Dorsolateral prefrontal cortex (tissue), 120 donors: ENCODE measurements at regions of chr2 and their contacts with region 1.

Region 1: DNA sequence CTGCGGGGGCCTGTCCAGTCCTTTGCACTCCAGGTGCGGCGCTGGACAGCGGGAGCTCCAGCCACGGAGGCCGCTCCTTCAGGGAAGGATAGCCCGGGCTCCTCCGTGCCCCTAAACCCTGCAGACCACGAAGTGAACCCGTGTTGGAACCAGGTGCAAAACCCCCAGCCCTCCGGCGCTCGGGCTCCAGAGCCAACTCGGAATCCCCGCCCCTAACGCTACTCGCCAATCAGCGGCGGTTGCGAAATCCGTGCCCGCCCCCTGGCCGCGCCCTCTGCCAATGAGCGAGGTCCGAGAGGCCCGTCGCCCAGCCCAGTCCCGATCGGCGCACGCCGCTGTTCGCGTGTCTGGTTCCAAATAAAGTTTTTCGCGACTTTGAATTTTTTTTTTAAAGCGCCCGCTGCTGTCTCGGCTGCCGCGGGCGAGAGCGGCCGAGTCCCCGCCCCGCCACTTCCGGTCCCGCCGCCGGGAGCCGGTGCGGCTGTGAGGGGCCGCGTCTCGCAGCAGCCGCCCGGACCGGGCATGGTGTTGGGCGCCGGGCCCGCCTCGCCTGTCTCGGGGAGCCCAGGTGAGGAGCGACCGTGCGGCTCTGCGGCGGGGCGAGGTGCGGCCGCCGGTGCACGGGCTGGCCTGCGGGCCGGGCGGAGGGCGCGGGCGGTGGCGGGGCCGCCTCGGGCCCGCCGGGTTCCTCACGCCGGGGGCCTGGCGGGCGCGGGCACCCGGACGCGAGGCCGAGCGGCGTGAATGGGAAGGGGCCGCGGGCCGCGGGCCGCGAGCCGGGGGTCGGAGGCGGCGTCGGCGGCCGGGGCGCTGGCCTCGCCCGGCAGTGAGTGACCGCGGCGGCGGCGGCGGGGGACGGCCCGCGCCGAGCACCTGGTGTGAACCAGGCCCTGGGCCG is at the start of gene UBE2F:
- DNase-seq: peak; percentile 93 to 99 (median 96)
- H3K4me3 ChIP-seq: peak within 1 kb of the TSS; percentile 53 to 100 (median 84)
- H3K27ac ChIP-seq: peak within 1 kb of the TSS in 51 of 59 donors; percentile 6 to 88 (median 66)
- H3K27me3 ChIP-seq: no peaks in the 10 kb centered on the region
- CTCF ChIP-seq: peak in 46 of 56 donors; percentile 6 to 67 (median 38)
- total RNA-seq, gene UBE2F: 30.6 to 63.0 (median 47.0) TPM

Region 2: DNA sequence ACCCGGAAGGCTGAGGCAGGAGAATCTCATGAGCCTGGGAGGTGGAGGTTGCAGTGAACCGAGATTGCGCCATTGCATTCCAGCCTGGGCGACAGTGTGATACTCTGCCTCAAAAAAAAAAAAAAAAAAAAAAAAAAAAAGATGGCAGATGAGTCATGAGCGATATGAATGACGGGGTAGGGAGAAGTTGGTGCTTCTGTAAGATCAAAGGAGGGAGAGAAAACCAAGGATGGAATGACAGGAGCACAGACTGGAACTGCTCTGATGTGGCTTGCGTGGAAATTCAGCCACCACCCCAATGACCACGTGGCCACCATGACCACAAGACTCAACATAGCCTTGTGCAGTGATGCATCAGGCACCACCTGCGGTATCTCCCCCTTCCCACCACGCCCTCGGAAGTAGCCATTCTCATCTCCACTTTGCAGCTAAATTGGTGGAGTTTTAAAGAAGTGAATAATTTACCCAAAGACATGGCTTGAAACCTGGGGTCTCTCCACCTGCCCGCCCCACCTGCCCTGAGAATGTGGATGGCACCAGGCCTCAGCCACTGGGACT is 1301.2 kb before region 1 on chr2:
- intact Hi-C with region 1: no loop called
- DNase-seq: no peak
- H3K4me3 ChIP-seq: no peak overlapping the region
- H3K27ac ChIP-seq: no peak overlapping the region
- H3K27me3 ChIP-seq: peaks cover 0 to 6% (median 0%) of the 10 kb centered on the region in 45 donors
- CTCF ChIP-seq: no peak

Region 3: DNA sequence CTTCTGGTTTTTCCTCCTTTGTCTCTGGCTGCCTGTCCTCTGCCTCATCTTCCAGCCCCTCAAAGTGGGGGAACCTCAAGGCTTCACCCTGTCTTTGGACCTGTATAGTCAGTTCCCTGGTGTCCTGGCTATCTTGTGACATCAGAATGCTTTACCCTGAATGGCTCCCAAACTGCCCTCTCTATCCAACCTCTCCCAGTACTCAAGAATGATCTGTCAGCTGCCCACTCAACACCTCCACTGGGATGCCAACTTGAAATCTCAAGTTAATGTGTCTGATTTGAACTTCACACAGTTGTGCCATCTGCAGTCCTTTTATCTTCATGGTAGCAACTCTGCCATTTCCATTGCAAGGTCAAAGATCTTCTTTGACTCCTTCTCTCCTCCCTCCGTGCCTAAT is 43.8 kb after region 1 on chr2:
- intact Hi-C with region 1: loop called (anchors 1 to 5 kb)
- DNase-seq: no peak
- H3K4me3 ChIP-seq: no peak overlapping the region
- H3K27ac ChIP-seq: peak overlapping the region in 26 of 59 donors; percentile 20 to 98 (median 88)
- H3K27me3 ChIP-seq: no peaks in the 10 kb centered on the region
- CTCF ChIP-seq: no peak

Region 4: GRCh38 chr2:238060542-238061314 is 93.9 kb after region 1 on chr2 and contains the start of gene SCLY:
- intact Hi-C with region 1: loop called (anchors 1 to 2 kb)
- DNase-seq: peak; percentile 96 to 99 (median 98)
- H3K4me3 ChIP-seq: peak within 1 kb of the TSS; percentile 78 to 99 (median 95)
- H3K27ac ChIP-seq: peak within 1 kb of the TSS; percentile 64 to 96 (median 90)
- H3K27me3 ChIP-seq: no peaks in the 10 kb centered on the region
- CTCF ChIP-seq: peak in 32 of 56 donors; percentile 9 to 57 (median 26)
- total RNA-seq, gene SCLY: 12.6 to 37.0 (median 22.2) TPM

Region 5: DNA sequence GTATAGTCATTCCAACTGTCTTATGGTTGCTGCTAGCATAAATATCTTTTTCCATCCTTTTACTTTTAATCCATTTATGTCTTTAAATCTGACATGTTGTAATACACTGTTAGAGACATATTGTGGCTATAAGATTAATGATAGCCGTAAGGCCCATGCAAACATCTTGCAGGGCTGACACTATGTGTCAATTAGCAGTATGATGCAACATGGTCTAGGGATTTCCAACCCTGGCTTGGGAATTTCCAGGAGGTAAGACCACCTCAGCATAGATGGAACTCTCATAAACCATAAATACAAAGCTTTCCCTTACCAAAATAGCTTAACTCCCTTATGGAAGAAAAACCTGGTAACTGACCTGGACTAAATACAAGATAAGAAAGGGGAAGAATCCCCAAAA is 110.5 kb after region 1 on chr2:
- intact Hi-C with region 1: no loop called
- DNase-seq: no peak
- H3K4me3 ChIP-seq: no peak overlapping the region
- H3K27ac ChIP-seq: no peak overlapping the region
- H3K27me3 ChIP-seq: no peaks in the 10 kb centered on the region
- CTCF ChIP-seq: no peak

Region 6: GRCh38 chr2:238239872-238240751 is 273.3 kb after region 1 on chr2 and contains the start of gene HES6:
- intact Hi-C with region 1: loop called in 1 of 2 experiments (anchors 5 kb)
- DNase-seq: peak; percentile 75 to 91 (median 88)
- H3K4me3 ChIP-seq: peak within 1 kb of the TSS; percentile 40 to 84 (median 69)
- H3K27ac ChIP-seq: peak within 1 kb of the TSS in 31 of 59 donors; percentile 2 to 76 (median 60)
- H3K27me3 ChIP-seq: peaks cover 0 to 4% (median 0%) of the 10 kb centered on the region in 45 donors
- CTCF ChIP-seq: peak in 20 of 56 donors; percentile 2 to 62 (median 26)
- total RNA-seq, gene HES6: 16.3 to 92.6 (median 39.4) TPM